IMR-90 (cell line): ENCODE measurements at regions of chr14 and their contacts with region 1.

Region 1: DNA sequence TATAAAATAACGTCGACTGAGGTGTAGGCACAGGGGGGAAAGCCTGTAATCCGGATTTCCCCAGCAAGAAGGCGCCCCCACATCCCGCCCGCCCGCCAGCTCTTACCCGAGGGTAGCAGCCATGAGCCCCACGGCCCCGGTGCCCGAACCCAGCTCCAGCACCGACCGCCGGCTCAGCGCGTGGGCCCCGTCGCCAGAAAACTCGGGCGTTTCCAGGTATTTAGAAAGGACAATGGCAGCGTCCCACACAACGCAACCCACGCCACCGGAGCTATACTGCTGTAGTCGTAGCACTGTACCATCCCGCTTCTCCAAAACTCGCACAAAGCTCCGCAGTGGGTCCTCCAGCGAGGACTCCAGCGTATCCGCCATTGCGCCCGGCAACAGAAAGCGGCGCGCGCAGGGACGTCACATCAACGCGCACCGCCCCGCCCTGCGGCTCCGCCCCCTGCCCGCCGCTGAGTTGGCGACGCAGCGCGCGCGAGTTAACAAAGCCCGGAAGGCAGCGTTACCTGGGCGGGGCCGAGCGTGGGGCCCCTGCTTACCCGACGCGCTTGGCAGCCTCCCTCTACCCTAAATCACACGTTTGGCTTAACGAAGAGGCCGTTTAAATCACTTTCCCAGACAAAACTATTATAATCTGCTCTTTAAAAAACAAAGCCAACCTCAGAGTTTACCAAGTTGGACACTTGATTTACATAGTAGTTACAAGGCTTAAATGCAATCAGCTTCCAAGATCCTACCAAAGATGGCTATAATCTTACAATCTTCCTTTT is at the start of gene VCPKMT:
- DNase-seq: peak; percentile 86
- ATAC-seq: peak; percentile 99
- H3K4me3 ChIP-seq: peak within 1 kb of the TSS; percentile 92
- H3K27ac ChIP-seq: peak within 1 kb of the TSS; percentile 91
- H3K4me1 ChIP-seq: no peaks in the 10 kb centered on the region
- H3K27me3 ChIP-seq: no peaks in the 10 kb centered on the region
- CTCF ChIP-seq: no peak
- POLR2A ChIP-seq: peak; percentile 86
- RAD21 ChIP-seq: no peak
- total RNA-seq, gene VCPKMT: 2.5 and 4.7 TPM in 2 replicates

Region 2: DNA sequence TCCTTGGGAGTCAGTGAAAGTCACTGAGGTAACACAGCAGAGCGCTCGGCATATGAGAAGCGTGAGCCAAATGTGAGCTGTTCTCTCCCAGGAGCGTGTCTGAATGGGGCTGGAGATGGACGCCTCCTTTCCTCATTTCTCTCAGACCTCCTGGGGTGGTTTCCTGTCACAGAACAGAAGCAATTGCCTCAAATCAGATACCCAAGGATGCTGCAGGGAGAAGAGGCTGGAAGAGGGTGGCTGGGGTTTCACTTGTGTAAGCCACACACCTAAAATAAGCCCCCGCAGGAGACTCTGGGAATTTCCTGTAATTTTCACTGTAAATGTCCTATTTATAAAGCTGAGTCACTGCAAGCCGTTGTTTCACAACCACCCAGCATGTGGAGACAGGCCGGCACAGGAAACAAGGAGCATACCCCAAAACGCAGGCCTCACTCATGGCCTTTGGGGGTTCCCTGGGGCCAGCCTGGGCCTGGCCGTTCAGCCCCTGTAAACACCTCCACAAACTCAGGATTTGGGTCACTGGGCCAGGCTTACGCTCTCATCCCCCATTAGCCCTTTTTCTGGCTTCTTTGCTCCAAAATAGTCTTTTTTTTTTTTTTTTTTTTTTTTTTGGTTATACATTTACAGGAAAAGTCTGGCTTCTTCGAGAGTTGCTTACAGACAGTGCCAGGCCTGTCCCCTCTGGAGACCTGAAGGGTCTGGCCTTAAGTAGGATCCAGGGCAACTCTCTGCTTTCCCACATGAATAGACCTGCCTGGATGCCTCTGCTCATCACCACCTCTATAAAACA is 55.3 kb before region 1 on chr14:
- CTCF ChIA-PET with region 1: no interaction called
- POLR2A ChIA-PET with region 1: no interaction called
- dilution Hi-C with region 1: no loop called
- in situ Hi-C with region 1: no loop called
- intact Hi-C with region 1: no loop called
- DNase-seq: peak; percentile 95
- ATAC-seq: peak; percentile 79
- H3K4me3 ChIP-seq: no peak overlapping the region; the same call in 1 of the 2 replicates
- H3K27ac ChIP-seq: peak overlapping the region; percentile 92
- H3K4me1 ChIP-seq: peaks cover 33% of the 10 kb centered on the region
- H3K27me3 ChIP-seq: no peaks in the 10 kb centered on the region
- CTCF ChIP-seq: no peak; the same call in 1 of the 2 replicates
- POLR2A ChIP-seq: peak; percentile 7
- RAD21 ChIP-seq: peak; percentile 40; the same call in 1 of the 2 replicates

Region 3: GRCh38 chr14:50082784-50083466 is 33.4 kb before region 1 on chr14:
- CTCF ChIA-PET with region 1: no interaction called
- POLR2A ChIA-PET with region 1: no interaction called
- dilution Hi-C with region 1: no loop called
- in situ Hi-C with region 1: no loop called
- intact Hi-C with region 1: no loop called
- DNase-seq: peak; percentile 86
- ATAC-seq: peak; percentile 63
- H3K4me3 ChIP-seq: no peak overlapping the region
- H3K27ac ChIP-seq: no peak overlapping the region
- H3K4me1 ChIP-seq: peaks cover 13% of the 10 kb centered on the region
- H3K27me3 ChIP-seq: no peaks in the 10 kb centered on the region
- CTCF ChIP-seq: no peak
- POLR2A ChIP-seq: no peak
- RAD21 ChIP-seq: no peak

Region 4: GRCh38 chr14:50308363-50308915 is 192.1 kb after region 1 on chr14:
- CTCF ChIA-PET with region 1: no interaction called
- POLR2A ChIA-PET with region 1: interaction called, 15 read pairs
- dilution Hi-C with region 1: no loop called
- in situ Hi-C with region 1: no loop called
- intact Hi-C with region 1: no loop called
- DNase-seq: peak; percentile 34
- ATAC-seq: no peak
- H3K4me3 ChIP-seq: no peak overlapping the region
- H3K27ac ChIP-seq: no peak overlapping the region
- H3K4me1 ChIP-seq: peaks cover 4% of the 10 kb centered on the region
- H3K27me3 ChIP-seq: no peaks in the 10 kb centered on the region
- CTCF ChIP-seq: no peak
- POLR2A ChIP-seq: no peak
- RAD21 ChIP-seq: no peak

Region 5: GRCh38 chr14:50417853-50418252 is 301.5 kb after region 1 on chr14:
- CTCF ChIA-PET with region 1: no interaction called
- POLR2A ChIA-PET with region 1: no interaction called
- dilution Hi-C with region 1: no loop called
- in situ Hi-C with region 1: no loop called
- intact Hi-C with region 1: no loop called
- DNase-seq: peak; percentile 22
- ATAC-seq: peak; percentile 27; the same call in 1 of the 2 replicates
- H3K4me3 ChIP-seq: no peak overlapping the region
- H3K27ac ChIP-seq: peak overlapping the region; percentile 62; the same call in 1 of the 2 replicates
- H3K4me1 ChIP-seq: peaks cover 2% of the 10 kb centered on the region; the same call in 1 of the 2 replicates
- H3K27me3 ChIP-seq: no peaks in the 10 kb centered on the region
- CTCF ChIP-seq: no peak
- POLR2A ChIP-seq: no peak
- RAD21 ChIP-seq: no peak